Gastrocnemius medialis (tissue), 4 donors: ENCODE measurements at regions of chr2 and their contacts with region 1.

Region 1: DNA sequence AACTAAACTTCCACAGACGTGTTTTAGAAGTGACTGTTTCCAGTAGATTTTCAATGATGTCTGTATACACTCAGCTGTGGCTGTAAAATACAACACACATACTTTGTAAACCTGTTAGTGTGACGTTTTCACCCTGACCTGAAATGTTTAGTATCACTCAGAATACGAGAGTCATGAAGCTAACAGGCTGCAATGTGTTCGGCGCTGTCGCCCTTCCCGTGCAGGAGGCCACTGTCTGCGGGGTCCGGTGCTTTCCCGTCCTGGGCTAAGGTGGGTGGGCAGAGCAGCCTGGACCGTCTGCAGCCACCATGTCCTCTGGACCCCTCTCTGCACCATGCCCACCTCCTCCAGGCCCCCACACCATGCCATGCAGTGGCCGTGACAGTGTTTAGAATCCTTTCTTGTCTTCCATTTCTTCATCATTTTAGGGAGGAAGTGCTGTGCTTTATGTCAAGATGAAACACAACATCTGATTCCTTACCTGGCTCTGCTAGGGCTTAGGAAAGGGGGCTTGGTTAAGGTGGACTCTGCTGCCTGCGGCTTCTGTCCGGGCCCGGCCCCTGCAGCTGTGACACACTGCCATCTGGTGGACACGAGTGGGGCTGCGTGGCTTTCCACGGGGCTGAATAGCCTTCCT is 53.8 kb upstream of the RBM44 start:
- DNase-seq: peak; percentile 46 to 66
- ATAC-seq: peak; percentile 55 to 75
- H3K4me3 ChIP-seq: no peak overlapping the region
- H3K27ac ChIP-seq: peak overlapping the region; percentile 56 to 80 (median 66)
- H3K4me1 ChIP-seq: peaks cover 51% of the 10 kb centered on the region in 2 donors
- H3K27me3 ChIP-seq: no peaks in the 10 kb centered on the region
- CTCF ChIP-seq: peak; percentile 96 to 100 (median 97)
- POLR2A ChIP-seq: no peak

Region 2: DNA sequence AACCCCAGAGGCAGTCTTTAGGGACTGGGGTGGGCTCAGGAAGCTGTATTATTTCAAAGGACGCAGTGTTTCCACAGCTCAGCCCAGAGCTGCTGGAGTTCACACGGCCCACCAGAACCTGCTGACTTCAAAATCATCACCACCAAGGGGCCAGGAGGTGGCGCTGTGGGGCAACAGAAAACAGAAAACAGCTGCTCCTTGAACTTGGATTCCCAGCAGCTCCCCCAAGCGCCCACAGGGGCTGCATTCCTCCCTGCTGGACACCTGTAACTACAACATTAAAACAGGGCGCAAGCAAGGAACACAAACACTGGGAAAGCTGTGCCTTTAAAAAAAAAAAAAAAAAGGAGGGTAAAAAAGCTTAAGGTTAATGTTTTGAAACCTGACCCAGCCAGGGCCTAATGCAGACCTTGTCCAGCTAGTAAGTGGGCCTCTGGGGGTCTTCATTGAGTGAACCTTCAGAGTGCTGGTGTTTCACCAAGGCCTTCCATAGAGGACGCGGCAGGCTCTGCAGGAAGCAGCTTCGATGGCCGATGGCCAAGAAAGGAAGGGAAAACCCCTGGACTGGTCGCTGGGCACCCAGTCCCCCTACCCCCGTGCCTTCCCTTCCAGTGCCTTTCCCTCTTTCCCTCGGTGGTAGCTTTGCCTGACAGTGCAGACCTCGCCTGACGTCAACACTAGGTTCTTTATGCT is 231.8 kb before region 1 on chr2:
- in situ Hi-C with region 1: loop called in 1 of 4 experiments (anchors 10 kb)
- intact Hi-C with region 1: loop called (anchors 2 kb)
- DNase-seq: peak; percentile 65 to 83
- ATAC-seq: peak; percentile 48 to 71
- H3K4me3 ChIP-seq: no peak overlapping the region
- H3K27ac ChIP-seq: peak overlapping the region; percentile 68 to 89 (median 77)
- H3K4me1 ChIP-seq: peaks cover 34 to 36% of the 10 kb centered on the region in 2 donors
- H3K27me3 ChIP-seq: no peaks in the 10 kb centered on the region
- CTCF ChIP-seq: peak; percentile 86 to 94 (median 93)
- POLR2A ChIP-seq: no peak

Region 3: GRCh38 chr2:237590272-237591140 is 154.2 kb before region 1 on chr2 and contains the start of gene RAB17:
- in situ Hi-C with region 1: loop called in 3 of 4 experiments (anchors 5 to 10 kb)
- intact Hi-C with region 1: no loop called
- DNase-seq: peak in 1 of 2 donors; percentile 46
- ATAC-seq: peak; percentile 31 to 77
- H3K4me3 ChIP-seq: no peak within 1 kb of the TSS
- H3K27ac ChIP-seq: no peak within 1 kb of the TSS
- H3K4me1 ChIP-seq: peaks cover 14 to 15% of the 10 kb centered on the region in 2 donors
- H3K27me3 ChIP-seq: no peaks in the 10 kb centered on the region
- CTCF ChIP-seq: no peak
- POLR2A ChIP-seq: no peak
- total RNA-seq, gene RAB17: 0.42 to 1.3 TPM in 2 of 4 donors, not detected in the others

Region 4: DNA sequence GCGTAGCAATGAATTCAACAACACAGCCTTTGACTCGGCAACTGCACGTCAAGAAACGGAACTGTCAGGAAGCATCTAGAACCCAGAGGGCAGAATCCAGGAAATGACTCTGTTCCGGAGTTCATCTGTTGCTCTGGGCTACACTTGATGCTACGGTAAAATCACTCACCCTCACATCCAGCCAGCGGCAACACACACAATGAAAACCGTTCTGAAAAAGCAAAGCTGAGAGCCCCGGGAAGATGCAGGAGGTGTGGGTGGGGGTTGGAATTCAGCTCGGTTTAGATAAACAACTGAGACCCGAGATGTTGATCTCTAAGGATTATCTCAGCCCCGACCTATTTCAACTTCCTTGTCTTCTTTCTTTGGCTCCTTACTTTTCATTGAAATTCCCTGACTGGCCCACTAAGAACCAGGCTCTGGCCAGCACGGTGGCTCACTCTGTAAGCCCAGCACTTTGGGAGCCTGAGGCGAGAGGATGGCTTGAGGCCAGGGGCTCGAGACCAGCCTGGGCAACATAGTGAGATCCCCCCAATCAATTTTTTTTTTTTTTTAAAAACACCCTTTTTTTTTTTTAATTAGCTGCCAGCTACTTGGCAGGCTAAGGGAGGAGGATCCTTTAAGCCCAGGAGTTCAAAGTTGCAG is 140.9 kb before region 1 on chr2:
- in situ Hi-C with region 1: loop called in 3 of 4 experiments (anchors 5 to 10 kb)
- intact Hi-C with region 1: loop called (anchors 1 kb)
- DNase-seq: no peak
- ATAC-seq: no peak
- H3K4me3 ChIP-seq: peak overlapping the region in 1 of 4 donors; percentile 5
- H3K27ac ChIP-seq: peak overlapping the region in 2 of 4 donors; percentile 46 to 57
- H3K4me1 ChIP-seq: peaks cover 16 to 18% of the 10 kb centered on the region in 2 donors
- H3K27me3 ChIP-seq: no peaks in the 10 kb centered on the region
- CTCF ChIP-seq: no peak
- POLR2A ChIP-seq: peak in 1 of 2 donors; percentile 51

Region 5: GRCh38 chr2:237685408-237685807 is 59.3 kb before region 1 on chr2:
- in situ Hi-C with region 1: loop called in 1 of 4 experiments (anchors 10 kb)
- intact Hi-C with region 1: no loop called
- DNase-seq: no peak
- ATAC-seq: no peak
- H3K4me3 ChIP-seq: no peak overlapping the region
- H3K27ac ChIP-seq: no peak overlapping the region
- H3K4me1 ChIP-seq: peaks cover 55 to 56% of the 10 kb centered on the region in 2 donors
- H3K27me3 ChIP-seq: no peaks in the 10 kb centered on the region
- CTCF ChIP-seq: peak in 1 of 5 experiments; percentile 20
- POLR2A ChIP-seq: no peak

Region 6: GRCh38 chr2:237714690-237715458 is 29.9 kb before region 1 on chr2:
- in situ Hi-C with region 1: no loop called
- intact Hi-C with region 1: no loop called
- DNase-seq: peak; percentile 49 to 82
- ATAC-seq: peak; percentile 76 to 89
- H3K4me3 ChIP-seq: peak overlapping the region; percentile 39 to 57 (median 40)
- H3K27ac ChIP-seq: peak overlapping the region; percentile 78 to 91 (median 82)
- H3K4me1 ChIP-seq: peaks cover 68 to 72% of the 10 kb centered on the region in 2 donors
- H3K27me3 ChIP-seq: no peaks in the 10 kb centered on the region
- CTCF ChIP-seq: no peak
- POLR2A ChIP-seq: no peak